Transverse colon (tissue), 4 donors: ENCODE measurements at regions of chrX and their contacts with region 1.

Region 1: GRCh38 chrX:133698298-133698697 is 283.0 kb upstream of the GPC4 start:
- DNase-seq: no peak
- H3K4me3 ChIP-seq: no peak overlapping the region
- H3K27ac ChIP-seq: no peak overlapping the region
- H3K4me1 ChIP-seq: no peaks in the 10 kb centered on the region
- H3K27me3 ChIP-seq: no peaks in the 10 kb centered on the region
- CTCF ChIP-seq: no peak
- EP300 ChIP-seq: no peak
- POLR2A ChIP-seq: no peak

Region 2: GRCh38 chrX:133045986-133046385 is 652.3 kb before region 1 on chrX:
- in situ Hi-C with region 1: loop called in 1 of 4 experiments (anchors 25 kb)
- intact Hi-C with region 1: no loop called
- DNase-seq: no peak
- H3K4me3 ChIP-seq: no peak overlapping the region
- H3K27ac ChIP-seq: no peak overlapping the region
- H3K4me1 ChIP-seq: no peaks in the 10 kb centered on the region
- H3K27me3 ChIP-seq: no peaks in the 10 kb centered on the region
- CTCF ChIP-seq: peak; percentile 28 to 41 (median 31)
- EP300 ChIP-seq: no peak
- POLR2A ChIP-seq: no peak

Region 3: DNA sequence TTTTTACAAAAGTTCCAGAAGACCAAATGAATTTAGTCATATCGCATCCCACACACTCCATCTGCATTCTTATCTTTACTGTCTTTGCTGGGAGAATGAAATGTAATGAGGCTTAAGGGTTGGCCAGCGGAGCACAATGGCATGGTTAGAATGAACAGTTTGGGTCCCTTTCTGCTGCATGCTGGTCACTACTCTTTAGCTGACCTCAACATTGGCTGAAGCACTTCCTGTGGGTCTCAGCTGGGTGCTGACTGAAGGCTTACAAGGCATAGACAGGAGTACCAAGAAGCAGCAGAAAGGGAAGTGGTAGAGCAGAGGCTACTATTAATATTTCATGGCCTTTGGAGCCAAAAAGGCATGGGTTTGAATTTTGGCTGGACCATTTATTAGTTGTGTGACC is 123.6 kb before region 1 on chrX:
- in situ Hi-C with region 1: no loop called
- intact Hi-C with region 1: no loop called
- DNase-seq: no peak
- H3K4me3 ChIP-seq: no peak overlapping the region
- H3K27ac ChIP-seq: no peak overlapping the region
- H3K4me1 ChIP-seq: no peaks in the 10 kb centered on the region
- H3K27me3 ChIP-seq: no peaks in the 10 kb centered on the region
- CTCF ChIP-seq: no peak
- EP300 ChIP-seq: no peak
- POLR2A ChIP-seq: no peak

Region 4: DNA sequence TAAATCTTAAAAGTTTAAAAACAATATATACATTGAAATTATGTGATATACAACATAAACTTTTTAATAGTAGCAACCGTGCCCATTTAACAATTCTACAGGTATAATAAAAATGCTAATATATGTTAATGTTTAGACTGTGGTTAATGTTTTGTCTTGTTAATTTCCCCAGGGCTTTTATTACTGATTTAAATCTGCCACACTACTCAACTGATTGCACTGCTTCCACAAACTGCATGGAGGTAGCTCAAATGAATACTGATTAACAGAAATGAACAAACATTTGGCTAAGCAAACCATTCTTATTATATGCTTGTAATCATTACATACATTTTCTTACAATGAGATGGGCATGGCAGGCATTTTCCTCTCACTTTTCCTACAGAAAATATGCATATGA is 11.2 kb after region 1 on chrX:
- in situ Hi-C with region 1: no loop called
- intact Hi-C with region 1: loop called (anchors 1 kb)
- DNase-seq: no peak
- H3K4me3 ChIP-seq: no peak overlapping the region
- H3K27ac ChIP-seq: no peak overlapping the region
- H3K4me1 ChIP-seq: no peaks in the 10 kb centered on the region
- H3K27me3 ChIP-seq: no peaks in the 10 kb centered on the region
- CTCF ChIP-seq: no peak
- EP300 ChIP-seq: no peak
- POLR2A ChIP-seq: no peak